Right cardiac atrium (tissue), 5 donors: ENCODE measurements at regions of chr19 and their contacts with region 1.

Region 1: DNA sequence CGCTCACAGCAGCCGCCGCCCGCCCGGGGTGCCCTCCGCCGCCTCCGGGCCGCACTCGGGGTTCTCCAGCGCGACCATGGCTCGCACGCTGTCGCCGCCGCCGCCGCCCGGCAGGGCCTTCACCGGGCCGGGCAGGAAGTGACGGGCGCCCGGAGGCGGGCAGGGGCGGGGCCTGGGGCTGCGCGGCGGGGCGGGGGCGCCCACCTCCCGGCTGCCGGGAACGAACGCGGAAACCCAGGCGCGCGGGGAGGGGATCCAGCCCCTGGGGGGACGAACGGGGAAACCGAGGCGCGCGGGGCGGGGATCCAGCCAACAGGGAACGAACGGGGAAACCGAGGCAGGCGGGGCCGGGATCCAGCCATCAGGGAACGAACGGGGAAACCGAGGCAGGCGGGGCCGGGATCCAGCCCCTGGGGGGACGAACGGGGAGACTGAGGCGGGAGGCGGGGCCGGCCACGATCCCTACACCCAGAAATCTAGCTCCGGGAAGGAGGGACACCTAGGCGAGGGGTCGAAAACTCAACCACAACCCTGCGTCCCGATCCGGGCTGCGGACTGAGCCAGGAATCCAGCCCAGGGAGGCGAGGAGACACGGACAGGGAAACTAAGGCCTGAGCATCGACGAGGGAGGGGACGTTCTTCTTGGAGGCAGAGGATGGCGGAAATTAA is at the start of gene R3HDM4:
- DNase-seq: peak; percentile 83 to 93 (median 92)
- ATAC-seq: peak; percentile 91 to 92
- H3K4me3 ChIP-seq: peak within 1 kb of the TSS; percentile 100
- H3K27ac ChIP-seq: peak within 1 kb of the TSS; percentile 91
- H3K4me1 ChIP-seq: peaks cover 2% of the 10 kb centered on the region
- H3K27me3 ChIP-seq: no peaks in the 10 kb centered on the region
- total RNA-seq, gene R3HDM4: 18.6 to 31.2 (median 21.2) TPM

Region 2: DNA sequence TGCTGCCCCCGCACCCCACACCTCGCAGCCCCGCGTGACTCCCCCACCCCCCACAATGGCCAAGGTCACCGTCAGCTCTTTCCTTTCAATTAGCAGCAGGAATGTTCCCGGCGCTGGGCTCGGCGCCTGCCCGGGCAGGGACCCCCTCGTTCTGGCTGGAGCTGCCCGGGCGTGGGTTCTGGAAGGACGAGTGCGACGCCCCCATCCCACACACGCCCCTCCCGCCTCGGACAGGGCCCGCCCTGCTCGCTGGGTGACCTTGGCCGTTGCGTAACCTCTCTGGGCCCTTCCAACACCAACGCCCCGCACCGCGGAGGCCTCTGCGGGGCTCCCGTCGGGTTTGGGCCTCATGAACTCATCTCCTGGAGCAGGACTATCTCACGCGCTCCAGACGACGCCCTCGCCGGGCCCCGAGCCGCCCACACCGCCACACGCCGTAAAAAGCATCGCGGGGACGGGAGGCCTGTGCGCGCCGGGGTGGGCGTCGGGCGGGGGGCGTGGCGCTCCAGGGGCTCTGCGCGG is 194.2 kb before region 1 on chr19:
- intact Hi-C with region 1: no loop called
- DNase-seq: peak; percentile 91 to 95 (median 94)
- ATAC-seq: peak; percentile 74 to 81
- H3K4me3 ChIP-seq: no peak overlapping the region
- H3K27ac ChIP-seq: peak overlapping the region; percentile 38
- H3K4me1 ChIP-seq: no peaks in the 10 kb centered on the region
- H3K27me3 ChIP-seq: no peaks in the 10 kb centered on the region

Region 3: DNA sequence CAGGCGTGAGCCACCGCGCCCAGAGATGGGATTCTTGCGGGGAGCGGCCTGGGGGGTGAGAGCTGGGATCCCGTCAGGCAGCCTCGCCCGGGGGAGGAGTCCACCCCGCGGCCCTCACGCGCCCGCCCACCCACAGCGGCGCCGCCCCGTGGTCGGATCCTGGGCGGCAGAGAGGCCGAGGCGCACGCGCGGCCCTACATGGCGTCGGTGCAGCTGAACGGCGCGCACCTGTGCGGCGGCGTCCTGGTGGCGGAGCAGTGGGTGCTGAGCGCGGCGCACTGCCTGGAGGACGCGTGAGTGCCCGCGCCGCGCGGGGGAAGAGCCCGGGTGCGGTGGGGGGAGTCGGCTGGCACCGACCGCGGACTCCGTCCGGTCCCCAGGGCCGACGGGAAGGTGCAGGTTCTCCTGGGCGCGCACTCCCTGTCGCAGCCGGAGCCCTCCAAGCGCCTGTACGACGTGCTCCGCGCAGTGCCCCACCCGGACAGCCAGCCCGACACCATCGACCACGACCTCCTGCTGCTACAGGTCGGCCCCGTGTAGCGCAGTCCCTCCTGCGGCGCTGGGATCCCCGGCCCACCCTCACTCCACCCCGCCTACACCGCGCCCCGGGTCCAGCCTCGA is 52.6 kb before region 1 on chr19:
- intact Hi-C with region 1: loop called in 3 of 4 experiments (anchors 5 to 10 kb)
- DNase-seq: peak; percentile 84 to 93 (median 91)
- ATAC-seq: peak; percentile 63 to 64
- H3K4me3 ChIP-seq: peak overlapping the region; percentile 54
- H3K27ac ChIP-seq: no peak overlapping the region
- H3K4me1 ChIP-seq: no peaks in the 10 kb centered on the region
- H3K27me3 ChIP-seq: no peaks in the 10 kb centered on the region

Region 4: GRCh38 chr19:872266-872951 is 40.8 kb before region 1 on chr19:
- intact Hi-C with region 1: loop called in 3 of 4 experiments (anchors 2 to 10 kb)
- DNase-seq: peak; percentile 69 to 91 (median 81)
- ATAC-seq: peak; percentile 41
- H3K4me3 ChIP-seq: no peak overlapping the region
- H3K27ac ChIP-seq: no peak overlapping the region
- H3K4me1 ChIP-seq: no peaks in the 10 kb centered on the region
- H3K27me3 ChIP-seq: no peaks in the 10 kb centered on the region